Activated CD4-positive, alpha-beta T cell treated with anti-CD3 and anti-CD28 coated beads, Interleukin-2, amount 10 ng/mL, durations not matched to agents 24 days and 14 days (primary cell): ENCODE measurements at regions of chr12 and their contacts with region 1.

Region 1: GRCh38 chr12:31650927-31651326 is 8.6 kb upstream of the ETFBKMT start:
- DNase-seq: no peak
- H3K4me3 Mint-ChIP-seq: no peak overlapping the region
- H3K27ac Mint-ChIP-seq: no peak overlapping the region
- H3K4me1 Mint-ChIP-seq: peaks cover 11% of the 10 kb centered on the region
- H3K27me3 Mint-ChIP-seq: no peaks in the 10 kb centered on the region

Region 2: GRCh38 chr12:31687101-31687527 is 36.2 kb after region 1 on chr12:
- intact Hi-C with region 1: no loop called
- DNase-seq: no peak
- H3K4me3 Mint-ChIP-seq: no peak overlapping the region
- H3K27ac Mint-ChIP-seq: no peak overlapping the region
- H3K4me1 Mint-ChIP-seq: peaks cover 8% of the 10 kb centered on the region
- H3K27me3 Mint-ChIP-seq: no peaks in the 10 kb centered on the region

Region 3: DNA sequence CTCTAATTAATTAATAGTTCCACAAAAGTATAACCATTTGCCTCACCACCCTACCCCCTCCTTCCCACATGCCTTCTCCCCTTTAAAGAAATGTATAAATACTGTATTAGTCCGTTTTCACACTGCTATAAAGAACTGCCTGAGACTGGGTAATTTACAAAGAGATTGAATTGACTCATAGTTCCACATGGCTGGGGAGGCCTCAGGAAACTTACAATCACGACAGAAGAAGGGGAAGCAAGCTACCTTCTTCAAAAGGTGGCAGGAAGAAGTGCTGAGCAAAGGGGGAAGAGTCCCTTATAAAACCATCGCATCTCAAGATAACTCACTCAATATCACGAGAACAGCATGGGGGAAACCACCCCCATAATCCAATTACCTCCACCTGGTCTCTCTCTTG is 300.1 kb after region 1 on chr12:
- intact Hi-C with region 1: no loop called
- DNase-seq: no peak
- H3K4me3 Mint-ChIP-seq: no peak overlapping the region
- H3K27ac Mint-ChIP-seq: no peak overlapping the region
- H3K4me1 Mint-ChIP-seq: peaks cover 12% of the 10 kb centered on the region
- H3K27me3 Mint-ChIP-seq: no peaks in the 10 kb centered on the region

Region 4: GRCh38 chr12:32390572-32391219 is 739.8 kb after region 1 on chr12:
- intact Hi-C with region 1: loop called (anchors 2 kb)
- DNase-seq: peak; percentile 72
- H3K4me3 Mint-ChIP-seq: peak overlapping the region; percentile 62
- H3K27ac Mint-ChIP-seq: no peak overlapping the region
- H3K4me1 Mint-ChIP-seq: no peaks in the 10 kb centered on the region
- H3K27me3 Mint-ChIP-seq: peaks cover 3% of the 10 kb centered on the region

Region 5: DNA sequence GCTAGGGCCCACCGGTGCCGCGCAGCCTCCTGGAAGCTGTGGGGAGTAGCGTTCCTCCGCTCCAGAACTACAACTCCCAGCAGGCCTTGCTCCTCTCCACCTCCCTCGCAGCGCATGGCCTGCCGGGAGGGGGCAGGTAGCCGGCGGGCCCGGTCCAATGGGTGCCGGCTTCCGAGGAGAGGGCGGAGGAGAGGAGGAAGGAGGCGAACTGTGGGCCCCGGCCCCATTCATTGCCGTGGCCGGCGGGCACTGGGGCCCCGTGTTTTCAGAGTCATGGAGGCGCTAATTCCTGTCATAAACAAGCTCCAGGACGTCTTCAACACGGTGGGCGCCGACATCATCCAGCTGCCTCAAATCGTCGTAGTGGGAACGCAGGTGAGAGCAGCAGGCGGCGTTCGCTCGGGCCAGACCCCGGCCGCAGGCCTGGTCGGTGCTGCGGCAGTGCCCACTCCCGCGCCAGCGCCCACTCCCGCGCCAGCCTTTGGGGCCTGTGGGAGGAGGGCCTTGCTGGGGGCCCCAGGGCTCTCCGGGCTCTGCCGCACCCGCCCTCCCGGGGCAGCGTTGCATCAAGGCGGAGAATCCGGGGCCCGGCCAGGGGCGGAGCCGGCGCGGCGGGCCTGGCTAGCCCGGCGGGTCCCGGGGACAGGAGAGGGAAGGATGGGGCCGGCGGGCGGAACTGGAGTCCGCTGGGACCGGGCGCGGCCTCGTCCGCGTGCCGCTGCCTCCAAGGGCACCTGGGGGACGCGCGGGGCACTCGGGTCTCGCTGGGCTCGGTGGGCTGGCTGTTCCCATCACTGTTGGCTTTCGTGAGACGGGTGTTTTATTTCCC is 1028.4 kb after region 1 on chr12 and contains the start of gene DNM1L:
- intact Hi-C with region 1: loop called (anchors 5 kb)
- DNase-seq: peak; percentile 98
- H3K4me3 Mint-ChIP-seq: peak within 1 kb of the TSS; percentile 88
- H3K27ac Mint-ChIP-seq: peak within 1 kb of the TSS; percentile 93
- H3K4me1 Mint-ChIP-seq: peaks cover 21% of the 10 kb centered on the region
- H3K27me3 Mint-ChIP-seq: no peaks in the 10 kb centered on the region
- total RNA-seq, gene DNM1L: 83.3 and 90.7 TPM in 2 replicates